Left cardiac atrium (tissue), 4 donors: ENCODE measurements at regions of chr16 and their contacts with region 1.

Region 1: DNA sequence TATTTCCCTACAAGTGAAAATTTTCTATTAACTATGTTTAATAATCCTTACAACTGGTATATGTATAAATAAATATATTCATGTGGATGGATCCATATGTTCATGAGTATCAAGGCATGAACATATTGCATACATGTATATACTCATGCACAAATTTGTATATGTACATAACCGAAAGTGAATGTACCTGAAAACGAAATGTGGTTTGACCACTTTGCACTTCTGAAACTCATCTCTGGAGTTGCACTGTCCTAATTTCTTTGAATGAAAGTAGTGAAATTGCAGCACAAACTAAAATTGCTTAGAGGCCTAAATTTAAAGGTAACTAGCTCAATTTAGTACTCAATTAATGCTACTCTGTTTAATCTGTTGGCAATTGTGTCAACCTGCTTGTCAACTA is 27.4 kb upstream of the GNAO1 start:
- DNase-seq: no peak
- ATAC-seq: no peak

Region 2: GRCh38 chr16:56102183-56102686 is 61.7 kb before region 1 on chr16:
- intact Hi-C with region 1: loop called in 1 of 2 experiments (anchors 10 kb)
- DNase-seq: peak; percentile 62
- ATAC-seq: peak; percentile 91 to 92